ENCODE measurements at regions of chr3 and their contacts with region 1.

Region 1: GRCh38 chr3:141544697-141545096 is 57.9 kb downstream of the RASA2 start:
- DNase-seq: peak; percentile 34
- H3K4me3 ChIP-seq: no peak overlapping the region
- H3K27ac ChIP-seq: peak overlapping the region; percentile 15
- H3K4me1 ChIP-seq: no peaks in the 10 kb centered on the region
- H3K27me3 ChIP-seq: no peaks in the 10 kb centered on the region
- CTCF ChIP-seq: no peak

Region 2: DNA sequence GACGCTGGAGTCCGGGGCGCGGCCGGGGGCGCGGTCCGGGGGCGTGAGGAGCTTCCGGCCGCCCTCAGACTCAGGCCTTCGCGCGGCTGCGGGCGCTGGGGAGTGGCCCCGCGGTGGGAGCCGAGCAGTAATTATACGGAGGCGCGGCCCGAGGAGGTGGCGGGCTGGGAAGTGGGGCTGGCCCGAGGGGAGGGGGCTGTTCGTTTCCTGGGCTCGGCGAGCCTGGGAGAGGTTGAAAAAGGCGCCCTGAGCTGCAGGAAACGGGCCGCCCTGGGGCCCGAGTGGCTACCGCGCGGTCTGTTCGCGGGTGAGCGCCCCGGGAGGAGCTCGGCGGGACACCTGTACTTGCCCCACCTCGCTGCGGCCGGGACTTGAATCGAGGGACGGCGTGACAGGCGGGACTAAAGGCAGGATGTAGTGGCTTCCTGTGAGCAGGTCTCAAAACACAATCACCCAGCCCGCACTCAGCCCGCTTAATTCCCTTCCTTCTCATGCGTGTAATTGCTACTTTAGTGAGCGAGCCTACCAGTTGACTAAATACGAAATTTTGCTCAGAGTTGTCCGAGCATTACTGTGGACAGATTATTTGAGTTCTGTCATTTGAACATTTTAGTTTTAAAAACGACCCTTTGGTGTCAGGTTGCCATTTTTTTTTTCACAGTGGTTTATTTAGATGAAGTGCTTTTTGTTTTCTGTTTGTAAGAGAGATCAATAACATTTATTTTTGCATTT is 57.0 kb before region 1 on chr3:
- intact Hi-C with region 1: loop called (anchors 5 kb)
- DNase-seq: peak; percentile 88
- H3K4me3 ChIP-seq: peak overlapping the region; percentile 69
- H3K27ac ChIP-seq: peak overlapping the region; percentile 99
- H3K4me1 ChIP-seq: no peaks in the 10 kb centered on the region
- H3K27me3 ChIP-seq: no peaks in the 10 kb centered on the region
- CTCF ChIP-seq: no peak

Measured in colonic mucosa (tissue), 4 donors.